Aorta (tissue), 5 donors: ENCODE measurements at regions of chr4 and their contacts with region 1.

Region 1: GRCh38 chr4:168831919-168832762 is 177.9 kb downstream of the CBR4 start:
- DNase-seq: peak; percentile 90 to 95
- ATAC-seq: peak; percentile 94
- H3K4me3 ChIP-seq: peak overlapping the region; percentile 54 to 90
- H3K27ac ChIP-seq: peak overlapping the region; percentile 79 to 97
- H3K4me1 ChIP-seq: peaks cover 0 to 6% of the 10 kb centered on the region in 2 donors
- H3K27me3 ChIP-seq: no peaks in the 10 kb centered on the region

Region 2: GRCh38 chr4:168585168-168586091 is 246.7 kb before region 1 on chr4:
- intact Hi-C with region 1: loop called in 1 of 2 experiments (anchors 10 kb)
- DNase-seq: peak; percentile 84 to 92
- ATAC-seq: peak; percentile 90
- H3K4me3 ChIP-seq: no peak overlapping the region
- H3K27ac ChIP-seq: no peak overlapping the region
- H3K4me1 ChIP-seq: peaks cover 2 to 6% of the 10 kb centered on the region in 2 donors
- H3K27me3 ChIP-seq: no peaks in the 10 kb centered on the region

Region 3: DNA sequence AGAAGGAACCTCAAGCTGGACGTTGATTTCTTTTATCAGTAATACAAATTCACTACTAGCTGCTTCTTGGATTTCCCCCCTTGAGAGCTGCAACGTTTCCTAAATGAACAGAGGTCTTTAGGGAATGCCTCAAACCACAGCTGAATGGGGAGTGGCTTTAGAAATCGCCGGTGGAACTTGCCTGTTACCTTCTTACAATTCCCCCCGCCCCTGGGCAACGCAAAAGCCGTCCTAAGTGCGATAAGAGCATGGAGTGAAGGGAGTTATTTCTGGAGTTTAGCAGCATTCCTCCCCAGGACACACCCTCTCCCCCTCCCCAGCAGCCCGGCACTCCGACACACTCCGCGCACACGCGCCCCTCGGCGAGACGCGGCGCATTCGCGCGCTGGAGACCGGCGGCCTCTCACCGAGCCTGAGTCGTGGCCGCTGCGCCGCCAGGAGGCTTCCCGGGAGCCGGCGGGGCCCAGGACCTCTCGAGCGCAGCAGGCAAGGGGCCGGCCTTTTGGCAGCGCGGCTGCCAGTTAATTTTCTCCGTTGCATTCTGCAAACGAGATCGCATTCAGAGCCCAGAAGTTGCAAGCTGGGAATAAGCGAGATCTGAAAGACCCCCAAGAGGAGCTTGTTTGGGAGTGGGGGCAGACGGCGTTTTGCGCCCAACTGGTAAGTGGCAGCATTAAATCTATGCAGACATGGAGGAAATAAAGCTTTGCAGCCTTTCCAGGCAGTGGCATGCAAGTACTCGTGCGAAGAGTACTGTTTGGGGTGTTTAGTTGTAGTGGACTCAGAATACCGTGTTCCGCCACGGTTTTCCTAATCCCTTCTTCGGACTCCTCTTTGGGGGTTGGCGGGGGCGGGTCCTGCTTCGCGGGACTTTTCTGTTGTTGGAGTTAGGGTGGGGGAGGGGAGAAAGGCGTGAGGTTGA is 200.6 kb before region 1 on chr4:
- intact Hi-C with region 1: loop called in 1 of 2 experiments (anchors 5 kb)
- DNase-seq: peak; percentile 76 to 90
- ATAC-seq: peak; percentile 89
- H3K4me3 ChIP-seq: peak overlapping the region; percentile 69 to 99
- H3K27ac ChIP-seq: peak overlapping the region; percentile 46 to 79
- H3K4me1 ChIP-seq: peaks cover 1 to 7% of the 10 kb centered on the region in 2 donors
- H3K27me3 ChIP-seq: no peaks in the 10 kb centered on the region

Region 4: GRCh38 chr4:168815379-168816345 is 16.5 kb before region 1 on chr4:
- intact Hi-C with region 1: loop called (anchors 1 to 2 kb)
- DNase-seq: no peak
- ATAC-seq: peak; percentile 48
- H3K4me3 ChIP-seq: no peak overlapping the region
- H3K27ac ChIP-seq: peak overlapping the region; percentile 76 to 88
- H3K4me1 ChIP-seq: peaks cover 0 to 3% of the 10 kb centered on the region in 2 donors
- H3K27me3 ChIP-seq: no peaks in the 10 kb centered on the region

Region 5: GRCh38 chr4:168877511-168878491 is 45.7 kb after region 1 on chr4:
- intact Hi-C with region 1: loop called (anchors 5 kb)
- DNase-seq: peak; percentile 74 to 88
- ATAC-seq: peak; percentile 77
- H3K4me3 ChIP-seq: peak overlapping the region in 1 of 2 donors; percentile 11
- H3K27ac ChIP-seq: peak overlapping the region; percentile 79 to 91
- H3K4me1 ChIP-seq: peaks cover 7 to 12% of the 10 kb centered on the region in 2 donors
- H3K27me3 ChIP-seq: no peaks in the 10 kb centered on the region

Region 6: DNA sequence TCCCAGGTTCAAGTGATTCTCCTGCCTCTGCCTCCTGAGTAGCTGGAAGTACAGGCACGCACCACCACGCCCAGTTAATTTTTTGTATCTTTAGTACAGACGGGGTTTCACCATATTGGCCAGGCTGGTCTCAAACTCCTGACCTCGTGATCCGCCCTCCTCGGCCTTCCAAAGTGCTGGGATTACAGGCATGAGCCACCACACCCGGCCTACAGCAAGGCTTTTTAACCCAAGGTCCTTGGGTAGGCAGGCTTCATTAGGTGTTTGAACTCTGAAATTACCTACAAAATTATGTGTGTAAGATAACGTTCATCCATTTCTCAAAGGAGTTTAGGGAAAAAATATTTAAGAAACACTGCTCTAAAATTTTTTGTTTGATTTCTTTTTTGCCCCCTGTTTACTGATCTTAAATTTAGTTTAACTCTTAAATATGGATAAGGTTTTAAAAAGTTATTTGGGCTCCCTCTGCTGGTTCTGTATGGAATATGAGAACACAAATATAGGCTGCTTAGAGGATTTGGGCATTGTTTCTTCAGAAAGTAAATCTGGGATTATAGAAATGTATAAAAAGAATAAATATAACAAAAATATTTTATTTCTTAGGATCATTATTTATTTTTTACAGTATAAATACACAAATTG is 85.1 kb after region 1 on chr4:
- intact Hi-C with region 1: loop called in 1 of 2 experiments (anchors 5 kb)
- DNase-seq: peak in 1 of 2 donors; percentile 36
- ATAC-seq: peak; percentile 61
- H3K4me3 ChIP-seq: no peak overlapping the region
- H3K27ac ChIP-seq: no peak overlapping the region
- H3K4me1 ChIP-seq: no peaks in the 10 kb centered on the region
- H3K27me3 ChIP-seq: no peaks in the 10 kb centered on the region